ENCODE measurements at regions of chr6 and their contacts with region 1.

Region 1: DNA sequence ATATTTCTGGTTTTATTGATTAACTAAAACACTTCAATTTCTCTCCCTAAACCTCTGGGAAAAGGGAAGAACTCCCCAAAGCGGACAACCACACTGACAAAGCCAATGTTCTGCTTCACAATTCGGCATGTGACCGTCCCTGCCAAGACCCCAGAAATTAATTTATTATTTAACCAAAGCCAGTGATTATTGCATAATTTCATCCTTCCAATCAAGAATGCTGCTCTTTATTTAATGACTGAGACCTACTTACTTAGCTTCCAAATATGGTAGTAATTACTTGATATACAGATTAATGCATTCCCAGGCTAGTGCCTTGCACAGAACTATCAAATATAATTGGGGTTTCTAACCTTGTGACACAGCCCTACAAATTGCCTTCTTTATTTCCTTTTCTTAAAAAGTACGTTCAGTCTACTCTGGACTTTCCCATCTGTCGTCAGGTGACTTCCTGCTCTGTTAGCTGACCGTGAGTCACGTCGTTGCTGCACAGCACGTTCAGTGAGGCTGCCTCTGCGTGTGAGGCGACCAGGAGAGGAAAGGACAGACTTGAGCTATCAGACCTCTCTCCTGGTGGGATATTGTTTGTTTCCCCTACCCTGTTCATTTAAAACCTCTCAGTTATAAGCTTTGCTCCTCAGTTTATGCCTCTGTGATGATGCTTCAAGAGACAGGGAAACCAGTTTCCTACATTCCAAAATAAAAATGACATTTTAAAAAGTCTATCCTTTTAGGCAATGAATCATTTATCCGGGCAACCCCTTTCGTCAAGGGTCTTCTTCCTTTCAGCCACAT is 55.7 kb upstream of the TNFAIP3 start:
- DNase-seq: peak; percentile 84
- ATAC-seq: peak; percentile 95
- H3K4me3 Mint-ChIP-seq: peak overlapping the region; percentile 35
- H3K27ac Mint-ChIP-seq: peak overlapping the region; percentile 72
- H3K4me1 Mint-ChIP-seq: peaks cover 42% of the 10 kb centered on the region
- H3K27me3 Mint-ChIP-seq: no peaks in the 10 kb centered on the region

Region 2: DNA sequence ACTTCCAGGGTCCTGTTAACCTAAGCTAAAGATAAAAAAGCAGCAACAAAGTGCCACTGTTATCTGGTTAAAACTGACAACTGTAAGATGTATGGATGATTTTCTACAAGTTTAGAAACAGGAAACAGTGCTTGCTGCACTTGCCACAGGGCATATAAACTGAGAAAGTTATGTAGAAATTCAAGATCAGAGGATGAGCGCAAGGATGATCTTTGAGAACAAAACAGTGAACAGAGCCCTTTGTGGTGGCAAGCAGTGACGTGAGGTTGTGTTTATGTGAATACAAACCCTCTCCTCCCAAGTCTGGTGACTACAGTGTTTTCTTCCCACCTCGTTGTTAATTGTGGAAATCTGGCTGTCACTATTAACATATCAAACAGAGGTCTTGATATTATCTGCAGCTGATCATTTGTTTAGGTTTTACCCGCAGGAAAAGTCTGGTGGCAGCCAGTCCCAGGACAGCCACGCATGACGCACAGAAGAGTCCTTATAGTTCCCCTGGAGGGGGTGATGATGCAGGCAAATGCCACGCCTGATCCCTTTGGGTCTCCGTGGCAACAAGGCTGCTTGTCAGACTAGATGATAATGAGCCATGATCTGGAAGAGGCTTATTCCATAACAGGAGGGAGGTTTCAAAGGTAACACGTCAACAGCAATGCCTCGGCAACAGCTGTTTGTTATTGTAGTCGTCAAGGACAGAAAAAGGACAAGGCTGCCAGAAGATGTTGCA is 12.7 kb after region 1 on chr6:
- CTCF ChIA-PET with region 1: interaction called, 24 read pairs
- POLR2A ChIA-PET with region 1: interaction called, 26 read pairs
- DNase-seq: peak; percentile 75
- ATAC-seq: peak; percentile 74
- H3K4me3 Mint-ChIP-seq: peak overlapping the region; percentile 70
- H3K27ac Mint-ChIP-seq: peak overlapping the region; percentile 97
- H3K4me1 Mint-ChIP-seq: peaks cover 82% of the 10 kb centered on the region
- H3K27me3 Mint-ChIP-seq: no peaks in the 10 kb centered on the region

Region 3: GRCh38 chr6:138052757-138053156 is 241.4 kb after region 1 on chr6:
- CTCF ChIA-PET with region 1: no interaction called
- POLR2A ChIA-PET with region 1: no interaction called
- DNase-seq: no peak
- ATAC-seq: no peak
- H3K4me3 Mint-ChIP-seq: no peak overlapping the region
- H3K27ac Mint-ChIP-seq: no peak overlapping the region
- H3K4me1 Mint-ChIP-seq: no peaks in the 10 kb centered on the region
- H3K27me3 Mint-ChIP-seq: peaks cover 20% of the 10 kb centered on the region

Measured in activated CD8-positive, alpha-beta T cell treated with anti-CD3 and anti-CD28 coated beads, Interleukin-2, amount 10 ng/mL, durations not matched to agents 7 days and 5 days (primary cell).